ENCODE measurements at regions of chr22 and their contacts with region 1.

Region 1: DNA sequence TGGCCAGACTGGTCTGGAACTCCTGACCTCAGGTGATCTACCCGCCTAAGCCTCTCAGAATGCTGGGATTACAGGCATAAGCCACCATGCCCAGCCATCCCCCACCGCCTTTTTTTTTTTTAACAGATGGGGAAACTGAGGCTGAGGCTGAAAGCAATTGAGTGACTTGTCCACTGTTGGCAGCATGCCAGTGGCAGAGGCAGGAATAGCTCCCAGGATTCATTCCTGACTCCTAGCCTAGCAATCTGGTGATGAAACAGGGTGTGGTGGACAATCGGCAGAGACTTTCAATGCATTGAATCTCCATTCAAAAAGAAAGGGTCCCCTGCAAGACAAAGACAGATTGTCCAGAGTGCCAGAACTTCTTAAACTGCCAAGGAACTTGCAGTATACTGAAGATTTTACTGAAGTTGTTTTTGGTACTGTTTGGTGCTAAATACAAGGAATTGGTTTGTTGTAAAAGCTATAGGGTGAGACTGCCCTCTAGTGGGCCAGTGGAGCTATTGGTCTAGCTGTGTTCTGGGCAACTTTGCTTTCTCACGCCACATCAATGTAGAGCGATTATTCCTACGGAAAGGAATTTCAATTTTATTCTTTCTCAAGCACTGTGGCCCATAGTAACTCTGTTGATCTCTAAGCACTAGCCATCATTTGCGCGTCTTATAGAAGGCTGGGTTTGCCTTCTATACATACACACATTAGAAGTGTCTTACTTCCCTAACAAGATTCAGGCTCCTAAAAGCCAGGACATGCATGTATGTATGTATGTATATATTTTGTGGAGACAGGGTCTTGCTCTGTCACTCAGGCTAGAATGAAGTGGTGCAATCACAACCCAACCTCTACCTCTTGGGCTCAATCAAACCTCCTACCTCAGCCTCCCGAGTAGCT is 21.0 kb downstream of the C22orf31 start:
- H3K4me3 ChIP-seq: no peak overlapping the region
- H3K27ac ChIP-seq: no peak overlapping the region
- H3K4me1 ChIP-seq: no peaks in the 10 kb centered on the region
- CTCF ChIP-seq: peak; percentile 63; the same call in 1 of the 2 replicates

Region 2: GRCh38 chr22:28600546-28601143 is 440.0 kb before region 1 on chr22:
- CTCF ChIA-PET with region 1: interaction called, 47 read pairs
- POLR2A ChIA-PET with region 1: no interaction called
- H3K4me3 ChIP-seq: no peak overlapping the region
- H3K27ac ChIP-seq: no peak overlapping the region
- H3K4me1 ChIP-seq: no peaks in the 10 kb centered on the region
- CTCF ChIP-seq: no peak

Region 3: DNA sequence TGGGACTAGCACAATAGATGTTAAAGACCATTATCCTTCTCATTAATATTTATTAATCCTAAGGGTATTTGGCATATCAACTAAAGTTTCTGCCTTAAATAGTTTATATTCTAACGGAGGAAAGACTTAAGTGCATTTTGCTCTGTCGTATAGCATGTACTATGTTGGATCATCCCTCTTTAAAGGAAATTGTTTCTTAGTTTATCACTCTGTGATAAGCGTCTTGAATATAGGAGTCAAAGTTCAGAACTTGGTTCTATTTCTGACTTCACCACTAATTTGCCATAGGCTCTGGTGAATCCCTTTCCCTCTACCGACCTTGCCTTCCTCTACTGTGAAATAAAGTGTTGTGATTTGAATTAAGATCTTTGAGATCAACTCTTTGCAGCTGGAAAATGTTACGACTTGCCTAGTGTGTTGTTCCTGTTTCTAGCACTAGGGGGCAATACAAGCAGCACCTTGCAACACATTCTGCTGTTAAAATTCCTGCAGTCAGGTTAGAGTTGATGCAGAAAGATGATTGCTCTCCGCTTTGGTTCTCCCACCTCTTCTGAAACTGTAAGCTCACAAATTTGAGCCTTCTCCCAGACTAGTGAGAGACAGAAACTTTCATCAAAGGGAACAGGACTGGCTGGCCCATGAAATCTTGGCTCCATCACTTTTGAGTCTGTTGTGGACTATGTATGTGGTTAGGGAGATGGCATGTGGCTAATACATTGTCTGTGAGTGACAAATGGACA is 185.1 kb before region 1 on chr22:
- CTCF ChIA-PET with region 1: interaction called, 121 read pairs
- POLR2A ChIA-PET with region 1: interaction called, 7 read pairs
- H3K4me3 ChIP-seq: no peak overlapping the region
- H3K27ac ChIP-seq: no peak overlapping the region
- H3K4me1 ChIP-seq: no peaks in the 10 kb centered on the region
- CTCF ChIP-seq: peak; percentile 64; the same call in 1 of the 2 replicates

Region 4: GRCh38 chr22:28882878-28883656 is 157.6 kb before region 1 on chr22 and contains the start of gene ZNRF3:
- CTCF ChIA-PET with region 1: interaction called, 11 read pairs
- POLR2A ChIA-PET with region 1: interaction called, 11 read pairs
- H3K4me3 ChIP-seq: peak within 1 kb of the TSS; percentile 77
- H3K27ac ChIP-seq: peak within 1 kb of the TSS; percentile 63; the same call in 1 of the 2 replicates
- H3K4me1 ChIP-seq: peaks cover 22% of the 10 kb centered on the region
- CTCF ChIP-seq: no peak

Region 5: GRCh38 chr22:28951969-28952521 is 88.6 kb before region 1 on chr22:
- CTCF ChIA-PET with region 1: interaction called, 12 read pairs
- POLR2A ChIA-PET with region 1: no interaction called
- H3K4me3 ChIP-seq: no peak overlapping the region
- H3K27ac ChIP-seq: no peak overlapping the region
- H3K4me1 ChIP-seq: peaks cover 18% of the 10 kb centered on the region
- CTCF ChIP-seq: peak; percentile 63

Region 6: GRCh38 chr22:29055192-29055830 is 14.7 kb after region 1 on chr22:
- CTCF ChIA-PET with region 1: interaction called, 16 read pairs
- POLR2A ChIA-PET with region 1: no interaction called
- H3K4me3 ChIP-seq: no peak overlapping the region
- H3K27ac ChIP-seq: no peak overlapping the region
- H3K4me1 ChIP-seq: peaks cover 7% of the 10 kb centered on the region
- CTCF ChIP-seq: no peak

Region 7: GRCh38 chr22:29245637-29246385 is 205.2 kb after region 1 on chr22:
- CTCF ChIA-PET with region 1: interaction called, 10 read pairs
- POLR2A ChIA-PET with region 1: no interaction called
- H3K4me3 ChIP-seq: no peak overlapping the region
- H3K27ac ChIP-seq: no peak overlapping the region
- H3K4me1 ChIP-seq: no peaks in the 10 kb centered on the region
- CTCF ChIP-seq: peak; percentile 92